Activated CD8-positive, alpha-beta T cell treated with anti-CD3 and anti-CD28 coated beads for 36 hours (primary cell): ENCODE measurements at regions of chr13 and their contacts with region 1.

Region 1: GRCh38 chr13:46126552-46127357 is 21.9 kb upstream of the CPB2 start:
- DNase-seq: peak; percentile 87
- ATAC-seq: peak; percentile 92
- H3K4me3 Mint-ChIP-seq: no peak overlapping the region
- H3K27ac Mint-ChIP-seq: peak overlapping the region; percentile 61
- H3K4me1 Mint-ChIP-seq: peaks cover 35% of the 10 kb centered on the region
- H3K27me3 Mint-ChIP-seq: no peaks in the 10 kb centered on the region
- CTCF ChIP-seq: peak; percentile 86

Region 2: DNA sequence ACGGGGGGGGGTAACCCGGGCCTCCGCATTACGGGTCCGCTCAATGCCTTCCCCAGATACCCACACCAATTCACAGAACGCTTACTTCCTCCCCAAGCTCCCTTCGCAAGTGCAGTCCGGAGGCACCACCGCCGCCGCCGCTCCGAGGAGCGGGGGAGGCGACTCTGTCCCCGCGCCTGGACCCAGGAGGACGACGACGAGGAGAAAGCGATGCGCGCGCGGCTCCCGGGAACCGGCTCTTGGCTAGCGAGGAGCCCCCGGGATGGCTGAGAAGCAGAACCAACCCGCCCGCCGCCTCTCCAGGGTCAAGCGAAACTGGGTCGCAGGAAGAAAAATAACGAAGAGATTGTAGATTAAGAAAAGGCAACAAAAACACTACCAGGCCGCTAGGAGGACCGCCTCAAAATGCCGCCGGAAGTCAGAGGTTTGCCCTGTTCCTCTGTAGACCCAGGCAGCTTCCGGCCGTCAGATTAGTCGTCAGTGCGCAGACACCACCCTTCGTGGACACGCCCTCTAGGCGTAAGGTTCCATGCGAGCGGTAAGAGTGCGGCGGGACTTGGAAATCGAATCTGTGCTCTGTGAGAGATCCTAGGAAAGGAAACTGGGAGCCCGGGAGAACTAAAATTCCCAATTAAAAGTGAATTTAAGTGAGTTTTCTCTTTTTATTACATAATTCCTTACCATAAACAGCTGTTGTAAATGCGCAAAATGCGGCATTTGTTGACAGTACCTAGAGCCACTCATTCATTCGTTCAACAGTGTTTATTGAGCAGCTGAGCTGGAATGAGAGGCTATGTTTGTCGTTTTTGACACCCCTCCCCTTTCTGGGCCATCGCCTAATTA is 74.2 kb before region 1 on chr13 and contains the start of gene ZC3H13:
- CTCF ChIA-PET with region 1: interaction called, 7 read pairs
- POLR2A ChIA-PET with region 1: interaction called, 4 read pairs
- intact Hi-C with region 1: loop called (anchors 10 kb)
- DNase-seq: peak; percentile 96
- ATAC-seq: peak; percentile 99
- H3K4me3 Mint-ChIP-seq: peak within 1 kb of the TSS; percentile 95
- H3K27ac Mint-ChIP-seq: peak within 1 kb of the TSS; percentile 97
- H3K4me1 Mint-ChIP-seq: peaks cover 34% of the 10 kb centered on the region
- H3K27me3 Mint-ChIP-seq: peaks cover 9% of the 10 kb centered on the region
- CTCF ChIP-seq: peak; percentile 51
- total RNA-seq, gene ZC3H13: 40.1 to 41.8 TPM

Region 3: DNA sequence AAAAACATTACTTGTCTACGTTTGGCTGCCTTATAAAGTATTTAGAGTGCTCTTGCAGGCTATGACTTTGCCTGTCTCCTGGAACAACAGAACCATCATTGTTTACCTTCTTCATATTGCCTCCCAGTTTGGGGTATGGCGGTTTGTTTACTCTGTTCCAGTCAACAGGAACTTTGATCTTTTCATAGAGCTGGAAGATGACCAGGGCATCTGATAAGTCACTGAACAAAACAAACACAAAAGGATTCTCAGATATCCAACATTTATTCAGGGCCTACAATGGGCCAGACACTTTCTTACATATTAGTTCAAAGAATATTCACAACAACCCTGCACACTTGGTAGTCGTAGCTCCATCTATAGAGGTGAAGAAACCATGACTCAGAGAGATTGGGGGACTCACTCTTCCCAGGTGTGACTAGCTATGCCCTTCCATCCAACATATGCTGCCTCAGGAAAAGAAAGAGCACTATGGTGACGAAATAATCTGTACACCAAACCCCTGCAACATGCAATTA is 16.5 kb after region 1 on chr13:
- CTCF ChIA-PET with region 1: interaction called, 47 read pairs
- POLR2A ChIA-PET with region 1: interaction called, 13 read pairs
- intact Hi-C with region 1: no loop called
- DNase-seq: no peak
- ATAC-seq: peak; percentile 29
- H3K4me3 Mint-ChIP-seq: no peak overlapping the region
- H3K27ac Mint-ChIP-seq: peak overlapping the region; percentile 79
- H3K4me1 Mint-ChIP-seq: peaks cover 42% of the 10 kb centered on the region
- H3K27me3 Mint-ChIP-seq: no peaks in the 10 kb centered on the region
- CTCF ChIP-seq: no peak

Region 4: GRCh38 chr13:46149272-46150133 is 22.7 kb after region 1 on chr13:
- CTCF ChIA-PET with region 1: interaction called, 30 read pairs
- POLR2A ChIA-PET with region 1: interaction called, 4 read pairs
- intact Hi-C with region 1: no loop called
- DNase-seq: peak; percentile 66
- ATAC-seq: peak; percentile 84
- H3K4me3 Mint-ChIP-seq: no peak overlapping the region
- H3K27ac Mint-ChIP-seq: peak overlapping the region; percentile 80
- H3K4me1 Mint-ChIP-seq: peaks cover 53% of the 10 kb centered on the region
- H3K27me3 Mint-ChIP-seq: no peaks in the 10 kb centered on the region
- CTCF ChIP-seq: no peak